ENCODE measurements at regions of chr19 and their contacts with region 1.

Region 1: DNA sequence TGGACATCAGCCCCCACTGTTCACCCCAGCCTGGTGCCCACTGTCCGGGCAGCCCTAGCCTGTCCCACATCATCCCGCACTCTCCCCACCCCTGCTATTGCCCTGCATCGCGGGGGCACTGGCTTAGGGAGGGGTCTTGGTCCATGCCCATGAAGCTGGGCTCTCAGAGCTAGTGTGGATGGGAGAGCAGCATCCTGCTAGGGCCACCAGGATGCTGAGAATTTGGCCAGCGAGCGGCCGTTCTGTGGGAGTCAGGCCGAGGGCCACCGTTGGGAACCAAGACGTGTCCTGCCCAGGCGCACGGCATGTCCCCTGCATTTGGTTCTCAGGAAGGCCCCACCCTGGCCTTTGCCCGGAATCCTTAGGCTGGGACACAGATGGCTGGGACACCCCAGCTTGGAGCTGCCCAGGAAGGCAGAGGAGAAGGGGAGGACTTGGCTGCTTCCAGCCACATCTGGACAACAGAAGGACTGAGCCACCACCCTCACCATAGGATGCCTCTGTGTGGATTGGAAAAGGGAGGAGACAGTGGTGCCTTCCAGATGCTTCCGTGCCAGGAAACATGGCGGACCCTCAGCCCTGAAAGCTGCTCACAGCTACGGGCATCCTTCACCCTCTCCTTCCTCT is 14.6 kb downstream of the ADGRE5 start:
- DNase-seq: no peak

Region 2: GRCh38 chr19:14147797-14148605 is 247.8 kb before region 1 on chr19:
- intact Hi-C with region 1: no loop called
- DNase-seq: peak; percentile 58 to 97 (median 78)

Region 3: GRCh38 chr19:14769201-14769600 is 373.4 kb after region 1 on chr19:
- intact Hi-C with region 1: loop called (anchors 5 kb)
- DNase-seq: no peak

Measured in posterior cingulate gyrus (tissue), 11 donors.